ENCODE measurements at regions of chr14 and their contacts with region 1.

Region 1: DNA sequence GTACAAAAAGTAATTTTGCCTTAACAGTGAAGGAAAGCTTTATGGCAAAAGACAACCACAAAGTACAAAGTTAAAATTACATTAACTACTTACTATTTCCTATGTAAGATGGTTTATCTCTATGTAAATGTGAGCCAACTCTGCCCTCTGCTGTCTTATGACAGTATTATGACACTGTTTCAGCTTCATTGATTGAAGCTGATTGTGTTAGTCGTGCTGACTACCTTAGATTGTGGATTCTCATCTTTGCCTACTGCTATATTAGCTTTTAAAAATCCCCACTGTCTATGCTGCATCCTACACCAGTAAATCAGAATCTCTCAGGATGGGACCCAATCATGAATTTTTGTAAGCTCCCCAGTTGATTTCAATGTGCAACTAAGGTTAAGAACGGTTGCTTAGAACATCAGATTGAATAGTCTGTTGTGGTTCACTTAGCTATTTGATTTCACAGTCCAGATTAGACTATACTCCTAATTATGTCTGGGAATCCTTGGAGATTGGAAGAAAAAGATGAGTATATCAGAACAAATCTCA is 12.2 kb upstream of the SPTB start:
- DNase-seq: peak; percentile 56
- ATAC-seq: peak; percentile 87
- H3K4me3 ChIP-seq: no peak overlapping the region
- H3K27ac ChIP-seq: no peak overlapping the region
- H3K4me1 ChIP-seq: no peaks in the 10 kb centered on the region
- H3K27me3 ChIP-seq: no peaks in the 10 kb centered on the region
- CTCF ChIP-seq: peak; percentile 76
- EP300 ChIP-seq: no peak
- POLR2A ChIP-seq: no peak
- RAD21 ChIP-seq: peak; percentile 51; the same call in 1 of the 2 replicates

Region 2: GRCh38 chr14:64772393-64772950 is 119.4 kb before region 1 on chr14:
- CTCF ChIA-PET with region 1: interaction called, 7 read pairs
- POLR2A ChIA-PET with region 1: no interaction called
- in situ Hi-C with region 1: no loop called
- intact Hi-C with region 1: loop called (anchors 5 kb)
- DNase-seq: peak; percentile 19
- ATAC-seq: peak; percentile 84
- H3K4me3 ChIP-seq: no peak overlapping the region
- H3K27ac ChIP-seq: no peak overlapping the region
- H3K4me1 ChIP-seq: peaks cover 2% of the 10 kb centered on the region; the same call in 1 of the 2 replicates
- H3K27me3 ChIP-seq: peaks cover 0 to 7% of the 10 kb centered on the region in 2 experiments; a peak in 3 of 5 replicates
- CTCF ChIP-seq: peak; percentile 74
- EP300 ChIP-seq: no peak
- POLR2A ChIP-seq: no peak
- RAD21 ChIP-seq: peak; percentile 41; the same call in 1 of the 2 replicates

Region 3: DNA sequence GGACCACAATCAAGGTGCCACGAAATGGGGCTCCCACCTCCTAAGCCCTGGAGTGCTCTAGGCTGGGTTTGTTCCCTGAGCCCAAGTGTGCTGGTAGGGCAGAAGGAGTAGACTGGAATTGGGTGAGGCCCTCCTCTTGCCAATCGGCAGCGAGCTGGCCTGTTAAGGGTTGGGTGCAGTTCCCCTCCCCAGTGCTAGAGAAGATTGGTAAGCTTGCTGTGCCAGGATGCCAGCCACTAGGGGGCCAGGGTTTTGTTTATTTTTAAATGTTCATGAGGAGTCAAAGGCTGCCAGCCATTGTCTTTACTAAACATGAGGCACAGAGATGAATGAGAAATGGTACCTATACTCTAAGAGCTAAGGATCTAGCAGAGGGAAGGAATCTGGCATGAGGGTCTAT is 91.9 kb before region 1 on chr14:
- CTCF ChIA-PET with region 1: interaction called, 6 read pairs
- POLR2A ChIA-PET with region 1: no interaction called
- in situ Hi-C with region 1: no loop called
- intact Hi-C with region 1: loop called (anchors 5 kb)
- DNase-seq: peak; percentile 35
- ATAC-seq: peak; percentile 61
- H3K4me3 ChIP-seq: no peak overlapping the region
- H3K27ac ChIP-seq: no peak overlapping the region
- H3K4me1 ChIP-seq: peaks cover 11% of the 10 kb centered on the region; the same call in 1 of the 2 replicates
- H3K27me3 ChIP-seq: peaks cover 2 to 3% of the 10 kb centered on the region in 2 experiments; a peak in 3 of 5 replicates
- CTCF ChIP-seq: peak; percentile 35
- EP300 ChIP-seq: no peak
- POLR2A ChIP-seq: no peak
- RAD21 ChIP-seq: no peak

Measured in HepG2 (cell line).